Heart left ventricle (tissue), 16 donors: ENCODE measurements at regions of chr7 and their contacts with region 1.

Region 1: GRCh38 chr7:32891800-32892520 is 400 bp upstream of the KBTBD2 start:
- DNase-seq: peak; percentile 99
- ATAC-seq: peak; percentile 88 to 93 (median 91)
- H3K4me3 ChIP-seq: peak overlapping the region; percentile 64 to 98 (median 80)
- H3K27ac ChIP-seq: peak overlapping the region; percentile 93 to 100 (median 98)
- H3K4me1 ChIP-seq: peaks cover 10 to 50% (median 45%) of the 10 kb centered on the region in 12 donors
- H3K27me3 ChIP-seq: no peaks in the 10 kb centered on the region
- CTCF ChIP-seq: no peak
- POLR2A ChIP-seq: peak in 1 of 2 donors; percentile 70

Region 2: GRCh38 chr7:32803406-32804141 is 88.4 kb before region 1 on chr7:
- intact Hi-C with region 1: loop called in 1 of 10 experiments (anchors 5 kb)
- DNase-seq: no peak
- ATAC-seq: no peak
- H3K4me3 ChIP-seq: no peak overlapping the region
- H3K27ac ChIP-seq: no peak overlapping the region
- H3K4me1 ChIP-seq: peaks cover 0 to 5% (median 0%) of the 10 kb centered on the region in 12 donors
- H3K27me3 ChIP-seq: no peaks in the 10 kb centered on the region
- CTCF ChIP-seq: no peak
- POLR2A ChIP-seq: no peak

Region 3: DNA sequence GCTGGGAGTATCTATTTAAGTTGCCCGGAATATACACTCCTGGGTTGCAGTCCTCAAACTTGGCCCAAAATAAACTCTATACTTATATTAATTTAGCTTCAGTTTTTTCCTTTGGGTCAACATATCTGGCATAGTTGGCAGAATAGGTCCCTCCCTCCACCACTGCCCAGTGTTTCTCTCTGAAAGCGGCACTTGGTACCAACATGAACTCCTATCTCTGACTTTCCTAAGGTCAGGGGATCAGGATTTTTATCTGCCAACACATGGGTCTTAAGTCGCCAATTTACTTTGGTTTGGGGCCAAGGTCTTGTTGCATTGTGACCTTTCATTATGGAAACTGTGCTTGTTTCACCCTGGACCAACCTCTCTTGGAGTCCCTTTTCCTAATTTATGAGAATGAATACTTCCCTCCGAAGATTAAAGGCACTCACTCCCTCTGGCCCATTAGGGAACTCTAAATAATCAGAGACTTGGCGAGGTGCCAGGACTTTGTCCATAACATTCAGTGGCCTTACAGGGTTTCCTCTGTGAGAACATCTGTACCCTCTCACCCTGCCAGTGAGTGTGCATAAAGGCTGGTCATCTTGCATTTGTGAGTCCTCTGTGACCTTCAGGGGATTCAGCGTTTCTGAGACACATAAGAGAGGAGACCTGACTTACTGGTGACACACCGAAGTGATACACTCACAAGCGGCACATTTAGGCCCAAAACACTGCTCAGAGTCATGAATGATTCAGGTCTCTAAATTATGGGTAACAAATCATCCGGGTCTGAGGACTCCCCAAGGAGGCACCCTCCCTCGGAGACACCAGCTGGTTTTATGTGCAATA is 45.6 kb after region 1 on chr7:
- intact Hi-C with region 1: loop called in 9 of 10 experiments (anchors 2 to 10 kb)
- DNase-seq: peak in 4 of 5 donors; percentile 55 to 81 (median 71)
- ATAC-seq: peak; percentile 49 to 66 (median 57)
- H3K4me3 ChIP-seq: peak overlapping the region in 1 of 12 donors; percentile 12
- H3K27ac ChIP-seq: peak overlapping the region; percentile 27 to 62 (median 56)
- H3K4me1 ChIP-seq: peaks cover 3 to 50% (median 30%) of the 10 kb centered on the region in 12 donors
- H3K27me3 ChIP-seq: no peaks in the 10 kb centered on the region
- CTCF ChIP-seq: no peak
- POLR2A ChIP-seq: no peak

Region 4: DNA sequence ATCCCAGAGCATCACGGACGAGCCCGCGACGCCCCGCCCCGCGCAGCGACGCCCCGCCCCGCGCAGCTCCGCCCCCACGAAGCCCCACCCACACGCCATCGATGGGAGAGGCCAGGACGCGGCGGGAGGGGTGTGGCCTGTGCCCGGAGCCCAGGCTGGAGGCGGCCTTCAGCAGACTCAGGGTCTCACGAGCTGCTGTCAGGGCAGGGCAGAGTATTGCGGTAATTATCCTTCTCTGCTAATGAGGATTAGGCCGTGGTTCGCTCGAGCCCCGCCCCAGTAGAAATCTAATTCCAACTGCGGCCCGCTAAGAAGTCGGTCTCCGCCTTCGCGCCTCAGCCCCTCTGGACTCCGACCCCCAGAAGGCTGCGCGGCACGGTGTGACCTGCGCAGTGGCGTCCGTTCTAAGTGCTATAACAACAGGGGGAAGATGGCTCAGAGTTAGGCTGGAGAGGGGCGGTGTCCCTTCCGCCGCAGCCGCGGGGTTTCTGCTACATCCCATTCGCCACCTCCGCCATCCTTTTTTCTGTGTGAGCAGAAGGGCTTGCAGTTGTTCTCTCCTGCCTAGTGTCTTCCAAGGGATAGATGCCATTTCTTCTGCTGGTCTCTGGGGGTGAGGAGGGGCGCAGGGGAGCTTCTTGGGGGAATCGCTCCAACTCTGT is 171.0 kb after region 1 on chr7:
- intact Hi-C with region 1: loop called in 1 of 10 experiments (anchors 5 kb)
- DNase-seq: peak; percentile 94 to 97 (median 94)
- ATAC-seq: peak; percentile 98 to 100 (median 99)
- H3K4me3 ChIP-seq: peak overlapping the region; percentile 68 to 95 (median 86)
- H3K27ac ChIP-seq: peak overlapping the region; percentile 91 to 98 (median 96)
- H3K4me1 ChIP-seq: peaks cover 3 to 41% (median 20%) of the 10 kb centered on the region in 12 donors
- H3K27me3 ChIP-seq: no peaks in the 10 kb centered on the region
- CTCF ChIP-seq: no peak
- POLR2A ChIP-seq: peak in 1 of 2 donors; percentile 83